ENCODE measurements at regions of chr20 and their contacts with region 1.

Region 1: DNA sequence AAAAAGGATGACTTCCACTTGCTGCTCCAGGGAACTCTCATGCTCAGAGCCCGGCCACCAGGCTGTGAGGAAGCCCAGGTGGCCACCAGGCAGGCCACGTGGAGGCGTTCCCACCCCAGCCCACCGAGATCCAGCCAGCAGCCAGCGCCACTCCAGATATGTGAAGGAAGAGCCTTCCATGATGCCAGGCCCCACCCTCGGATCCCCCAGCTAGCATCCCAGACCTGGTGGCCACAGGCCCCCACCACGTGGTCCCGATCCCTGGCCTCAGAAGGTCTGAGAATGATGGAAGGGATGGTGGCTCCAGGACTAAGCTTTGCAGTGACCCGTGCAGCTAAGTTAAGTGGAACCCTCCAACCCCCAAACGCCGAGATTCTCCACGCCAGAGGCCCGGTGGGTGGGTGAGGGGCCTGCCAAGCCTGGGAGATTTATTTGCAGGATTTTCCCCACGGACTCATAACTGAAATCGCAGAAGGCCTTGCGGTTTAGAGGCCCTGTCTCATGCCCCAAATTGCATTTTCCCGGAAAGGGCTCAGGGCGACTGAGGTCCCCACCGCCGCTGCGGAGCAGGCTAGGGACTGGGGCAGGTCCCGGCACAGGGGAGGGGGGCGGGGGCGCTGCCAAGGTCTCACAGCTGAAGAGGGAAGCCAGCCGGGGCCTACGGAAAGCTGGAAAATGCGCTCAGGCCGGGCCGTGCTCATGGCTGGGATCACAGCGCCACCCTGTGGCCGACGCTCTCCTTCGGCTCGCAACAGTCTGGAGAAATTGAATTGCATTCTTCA is 31.1 kb upstream of the CST7 start:
- DNase-seq: peak; percentile 58 to 82 (median 66)
- ATAC-seq: peak; percentile 47 to 91 (median 86)
- H3K4me3 ChIP-seq: peak overlapping the region in 2 of 12 donors; percentile 3 to 12
- H3K27ac ChIP-seq: no peak overlapping the region
- H3K4me1 ChIP-seq: peaks cover 0 to 10% (median 2%) of the 10 kb centered on the region in 12 donors
- H3K27me3 ChIP-seq: peaks cover 0 to 4% (median 0%) of the 10 kb centered on the region in 9 donors
- CTCF ChIP-seq: peak; percentile 69 to 89 (median 80)
- POLR2A ChIP-seq: no peak

Region 2: DNA sequence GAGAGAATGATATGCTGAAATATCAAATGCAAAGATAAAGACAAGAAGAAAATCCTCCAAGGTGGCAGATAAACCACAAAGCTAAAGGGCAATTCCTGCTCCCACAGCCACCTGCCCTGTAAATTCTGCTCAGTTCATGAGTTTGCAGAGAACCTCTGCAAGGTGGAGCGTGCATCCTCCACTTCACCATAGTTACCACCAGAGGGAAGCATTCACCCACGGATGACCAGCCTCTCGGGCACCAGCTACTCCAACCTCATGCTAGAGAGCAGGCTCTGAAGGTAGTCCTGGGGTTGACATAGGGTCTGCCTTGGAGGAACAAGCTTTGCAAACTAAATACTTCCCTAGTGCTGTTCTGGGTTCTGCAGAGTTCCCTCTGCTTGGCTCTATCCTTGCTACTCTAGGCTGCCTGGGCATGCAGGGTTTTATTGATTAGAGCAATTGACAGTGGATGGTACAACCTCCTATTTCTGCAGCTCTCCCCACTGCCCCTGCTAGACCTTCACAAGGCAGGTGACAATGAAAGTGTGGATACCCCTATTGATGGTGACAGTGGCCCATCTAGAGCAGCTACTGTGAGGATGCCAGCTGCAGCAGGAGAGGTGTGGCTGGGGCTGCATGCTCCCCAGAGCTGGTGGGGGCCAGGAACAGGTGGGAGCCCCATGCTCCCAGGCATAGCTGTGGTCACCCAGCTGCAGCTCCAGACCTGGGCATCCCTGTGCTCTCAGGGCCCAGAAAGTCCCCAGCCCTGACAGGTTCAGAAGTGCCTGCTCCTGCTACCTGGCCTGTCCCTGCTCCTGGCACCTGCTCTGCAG is 980.5 kb before region 1 on chr20:
- intact Hi-C with region 1: loop called in 7 of 10 experiments (anchors 2 to 5 kb)
- DNase-seq: peak in 4 of 5 donors; percentile 30 to 52 (median 41)
- ATAC-seq: peak; percentile 81 to 94 (median 92)
- H3K4me3 ChIP-seq: no peak overlapping the region
- H3K27ac ChIP-seq: no peak overlapping the region
- H3K4me1 ChIP-seq: peaks cover 0 to 6% (median 0%) of the 10 kb centered on the region in 12 donors
- H3K27me3 ChIP-seq: peaks cover 0 to 7% (median 0%) of the 10 kb centered on the region in 9 donors
- CTCF ChIP-seq: peak; percentile 60 to 83 (median 77)
- POLR2A ChIP-seq: no peak

Region 3: DNA sequence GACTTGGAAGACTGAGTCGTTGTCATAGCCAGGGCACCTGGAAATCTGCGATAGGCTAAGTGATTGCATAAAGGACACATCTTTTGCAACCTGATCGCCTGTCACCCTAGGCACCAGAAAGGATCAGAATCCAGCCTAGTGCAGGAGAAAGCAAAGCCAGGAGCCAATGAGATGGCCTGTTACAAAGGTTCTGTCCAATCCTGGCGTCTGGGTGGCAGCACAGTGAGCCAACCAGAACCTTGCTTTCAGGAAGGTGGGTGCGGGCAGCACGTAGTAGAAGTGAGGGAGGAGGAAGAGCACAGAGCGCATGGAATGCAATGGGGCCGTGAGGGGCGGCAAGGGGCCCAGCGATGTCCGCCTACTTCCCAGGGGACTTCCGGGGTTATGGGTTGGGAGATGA is 809.0 kb before region 1 on chr20:
- intact Hi-C with region 1: loop called in 3 of 10 experiments (anchors 5 to 10 kb)
- DNase-seq: no peak
- ATAC-seq: no peak
- H3K4me3 ChIP-seq: no peak overlapping the region
- H3K27ac ChIP-seq: no peak overlapping the region
- H3K4me1 ChIP-seq: no peaks in the 10 kb centered on the region
- H3K27me3 ChIP-seq: peaks cover 0 to 34% (median 0%) of the 10 kb centered on the region in 9 donors
- CTCF ChIP-seq: no peak
- POLR2A ChIP-seq: no peak

Region 4: DNA sequence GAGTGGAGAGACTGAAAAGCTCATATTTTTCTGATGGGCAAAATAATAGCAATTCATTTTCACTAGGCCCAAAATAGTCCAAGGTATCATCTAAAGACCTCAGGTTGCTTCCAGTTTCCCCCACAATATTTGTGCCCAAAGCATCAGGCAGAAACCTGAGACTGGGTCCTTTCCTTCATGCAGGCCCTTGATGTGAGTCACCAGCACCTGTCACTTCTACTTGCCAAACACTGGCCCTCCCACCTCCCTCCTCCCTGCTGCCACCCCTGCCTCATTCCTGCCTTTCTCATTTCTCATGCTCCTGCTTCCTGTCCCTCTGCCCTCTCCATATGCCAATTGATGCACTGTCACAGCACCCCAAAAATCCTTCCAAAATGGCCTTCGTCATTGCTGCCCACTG is 199.3 kb before region 1 on chr20:
- intact Hi-C with region 1: no loop called
- DNase-seq: no peak
- ATAC-seq: no peak
- H3K4me3 ChIP-seq: no peak overlapping the region
- H3K27ac ChIP-seq: no peak overlapping the region
- H3K4me1 ChIP-seq: no peaks in the 10 kb centered on the region
- H3K27me3 ChIP-seq: peaks cover 0 to 4% (median 0%) of the 10 kb centered on the region in 9 donors
- CTCF ChIP-seq: no peak
- POLR2A ChIP-seq: no peak

Region 5: DNA sequence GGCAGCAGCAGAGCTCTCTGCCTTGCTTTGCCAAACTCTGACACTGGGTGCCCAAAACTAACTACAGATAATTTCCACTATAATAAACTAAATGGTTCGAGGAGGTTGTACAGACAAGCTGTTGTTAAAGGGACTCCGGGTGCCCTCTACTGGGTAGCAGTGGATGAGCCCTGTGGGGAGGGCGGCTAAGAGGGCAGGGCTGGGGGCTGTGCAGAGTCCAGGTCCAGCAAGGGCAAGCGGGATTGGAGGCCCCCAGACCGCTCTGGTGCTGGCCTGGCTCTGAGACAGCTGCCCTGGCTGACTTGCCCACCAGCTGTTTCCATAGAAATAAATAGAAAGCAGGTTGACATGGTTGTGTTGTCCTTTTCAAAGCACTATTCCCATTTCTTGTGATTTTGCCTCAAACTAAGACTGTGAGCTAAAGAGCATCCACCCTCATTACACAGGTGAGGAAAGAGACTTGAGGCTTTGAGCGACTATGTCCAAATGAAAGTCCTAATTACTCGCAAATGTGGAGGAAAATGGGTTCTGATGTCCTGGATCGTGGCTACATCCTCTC is 136.5 kb before region 1 on chr20:
- intact Hi-C with region 1: loop called in 1 of 10 experiments (anchors 10 kb)
- DNase-seq: no peak
- ATAC-seq: peak in 3 of 4 donors; percentile 70 to 88 (median 72)
- H3K4me3 ChIP-seq: no peak overlapping the region
- H3K27ac ChIP-seq: no peak overlapping the region
- H3K4me1 ChIP-seq: no peaks in the 10 kb centered on the region
- H3K27me3 ChIP-seq: peaks cover 0 to 3% (median 0%) of the 10 kb centered on the region in 9 donors
- CTCF ChIP-seq: peak; percentile 26 to 59 (median 48)
- POLR2A ChIP-seq: no peak

Region 6: GRCh38 chr20:24992487-24993205 is 74.7 kb after region 1 on chr20 and contains the start of gene APMAP:
- intact Hi-C with region 1: no loop called
- DNase-seq: peak; percentile 96 to 98 (median 97)
- ATAC-seq: peak; percentile 89 to 97 (median 96)
- H3K4me3 ChIP-seq: peak within 1 kb of the TSS; percentile 63 to 98 (median 78)
- H3K27ac ChIP-seq: peak within 1 kb of the TSS; percentile 81 to 99 (median 94)
- H3K4me1 ChIP-seq: peaks cover 0 to 60% (median 31%) of the 10 kb centered on the region in 12 donors
- H3K27me3 ChIP-seq: no peaks in the 10 kb centered on the region
- CTCF ChIP-seq: peak in 1 of 12 donors; percentile 4
- POLR2A ChIP-seq: peak; percentile 49 to 96
- total RNA-seq, gene APMAP: 22.6 to 61.3 (median 31.9) TPM

Region 7: DNA sequence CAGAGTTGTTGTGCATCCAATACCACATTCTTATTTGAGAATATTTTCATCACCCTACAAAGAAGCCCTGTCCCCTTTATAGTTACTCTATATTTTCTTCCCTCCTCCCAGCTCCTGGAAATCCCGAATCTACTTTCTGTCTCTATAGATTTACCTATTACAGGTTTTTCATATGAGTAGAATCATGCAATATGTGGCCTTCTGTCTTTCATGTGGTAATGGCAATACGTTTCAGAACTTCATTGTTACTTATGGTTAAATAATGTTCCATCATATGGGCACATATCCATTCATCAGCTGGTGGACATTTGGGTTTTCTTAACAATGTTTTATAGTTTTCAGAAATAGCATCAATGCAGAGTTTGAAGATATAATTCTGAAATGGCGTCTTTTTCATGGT is 506.5 kb after region 1 on chr20:
- intact Hi-C with region 1: no loop called
- DNase-seq: no peak
- ATAC-seq: no peak
- H3K4me3 ChIP-seq: no peak overlapping the region
- H3K27ac ChIP-seq: no peak overlapping the region
- H3K4me1 ChIP-seq: no peaks in the 10 kb centered on the region
- H3K27me3 ChIP-seq: no peaks in the 10 kb centered on the region
- CTCF ChIP-seq: no peak
- POLR2A ChIP-seq: no peak